Gastrocnemius medialis (tissue), 4 donors: ENCODE measurements at regions of chr16 and their contacts with region 1.

Region 1: DNA sequence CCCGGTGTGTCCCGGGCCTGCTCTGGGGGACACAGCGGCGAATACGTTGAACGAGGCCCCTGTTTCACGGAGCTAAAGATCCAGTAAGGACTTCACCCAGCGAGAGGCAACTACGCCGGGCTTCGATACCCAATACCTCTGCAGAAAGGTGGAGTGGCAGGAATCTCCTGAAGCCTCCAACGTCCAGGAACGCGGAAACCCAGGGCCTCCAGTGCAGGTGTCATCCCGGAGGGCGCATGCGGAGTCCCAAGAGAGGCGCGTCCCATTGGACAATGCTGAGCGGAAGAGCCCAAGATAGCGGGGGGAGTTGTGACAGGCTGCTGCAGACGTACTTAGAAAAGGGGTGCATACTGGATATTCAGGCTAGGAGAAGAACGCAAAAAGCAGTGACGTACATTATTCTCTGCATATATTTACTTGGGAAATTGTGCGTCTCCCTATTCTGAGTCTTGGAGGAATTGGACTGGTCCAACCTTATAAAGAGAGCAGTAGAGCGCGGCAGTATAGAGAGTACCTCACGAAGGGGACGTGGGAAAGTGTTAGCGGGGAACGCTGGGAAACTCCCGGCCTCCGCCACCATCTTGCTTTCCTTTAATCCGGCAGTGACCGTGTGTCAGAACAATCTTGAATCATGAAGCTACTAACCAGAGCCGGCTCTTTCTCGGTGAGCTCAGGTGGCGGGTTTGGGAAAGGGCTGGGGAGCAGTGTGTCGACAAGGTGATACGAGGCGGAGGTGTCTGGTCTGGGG is at the start of gene UQCRC2:
- DNase-seq: peak; percentile 86
- ATAC-seq: peak; percentile 98
- H3K4me3 ChIP-seq: peak within 1 kb of the TSS; percentile 73 to 99 (median 86)
- H3K27ac ChIP-seq: peak within 1 kb of the TSS; percentile 88 to 98 (median 96)
- H3K4me1 ChIP-seq: peaks cover 37 to 45% of the 10 kb centered on the region in 2 donors
- H3K27me3 ChIP-seq: no peaks in the 10 kb centered on the region
- CTCF ChIP-seq: peak in 1 of 5 experiments; percentile 18
- POLR2A ChIP-seq: peak; percentile 87 to 96
- total RNA-seq, gene UQCRC2: 204 to 335 (median 276) TPM

Region 2: GRCh38 chr16:22054847-22055590 is 102.1 kb after region 1 on chr16:
- in situ Hi-C with region 1: no loop called
- intact Hi-C with region 1: no loop called
- DNase-seq: no peak
- ATAC-seq: no peak
- H3K4me3 ChIP-seq: no peak overlapping the region
- H3K27ac ChIP-seq: no peak overlapping the region
- H3K4me1 ChIP-seq: no peaks in the 10 kb centered on the region
- H3K27me3 ChIP-seq: no peaks in the 10 kb centered on the region
- CTCF ChIP-seq: no peak
- POLR2A ChIP-seq: no peak

Region 3: DNA sequence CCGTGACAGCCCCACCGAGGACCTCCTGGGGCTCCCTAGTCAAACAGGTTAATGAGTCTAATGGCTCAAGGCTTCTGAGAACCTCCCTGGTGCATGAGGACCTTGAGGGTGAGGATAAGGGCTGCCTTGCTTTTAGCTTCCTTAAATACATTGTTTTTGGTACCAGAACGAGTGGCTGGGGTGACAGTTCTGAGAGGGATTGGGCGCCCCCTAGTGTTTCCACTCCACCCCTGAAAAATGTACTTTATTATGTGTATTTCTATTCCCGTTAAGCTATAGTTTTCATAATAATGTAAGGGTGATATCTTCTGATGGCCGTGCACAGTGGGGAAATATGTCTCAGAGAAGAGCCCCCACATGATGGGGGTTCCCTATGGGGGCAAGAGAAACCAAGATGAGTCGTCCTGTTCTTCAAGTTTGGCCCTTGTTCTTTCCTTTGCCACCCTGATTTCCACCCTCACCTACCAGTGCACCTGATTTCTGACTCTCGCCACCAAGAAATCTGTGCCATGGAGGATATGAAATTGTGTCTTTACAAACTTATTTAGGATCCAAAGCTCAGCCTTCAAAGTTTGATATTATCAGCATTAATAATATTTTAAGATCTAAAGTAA is 124.8 kb after region 1 on chr16:
- in situ Hi-C with region 1: no loop called
- intact Hi-C with region 1: loop called (anchors 5 kb)
- DNase-seq: peak in 1 of 2 donors; percentile 22
- ATAC-seq: peak in 1 of 2 donors; percentile 51
- H3K4me3 ChIP-seq: no peak overlapping the region
- H3K27ac ChIP-seq: no peak overlapping the region
- H3K4me1 ChIP-seq: no peaks in the 10 kb centered on the region
- H3K27me3 ChIP-seq: no peaks in the 10 kb centered on the region
- CTCF ChIP-seq: peak; percentile 49 to 79 (median 71)
- POLR2A ChIP-seq: no peak

Region 4: DNA sequence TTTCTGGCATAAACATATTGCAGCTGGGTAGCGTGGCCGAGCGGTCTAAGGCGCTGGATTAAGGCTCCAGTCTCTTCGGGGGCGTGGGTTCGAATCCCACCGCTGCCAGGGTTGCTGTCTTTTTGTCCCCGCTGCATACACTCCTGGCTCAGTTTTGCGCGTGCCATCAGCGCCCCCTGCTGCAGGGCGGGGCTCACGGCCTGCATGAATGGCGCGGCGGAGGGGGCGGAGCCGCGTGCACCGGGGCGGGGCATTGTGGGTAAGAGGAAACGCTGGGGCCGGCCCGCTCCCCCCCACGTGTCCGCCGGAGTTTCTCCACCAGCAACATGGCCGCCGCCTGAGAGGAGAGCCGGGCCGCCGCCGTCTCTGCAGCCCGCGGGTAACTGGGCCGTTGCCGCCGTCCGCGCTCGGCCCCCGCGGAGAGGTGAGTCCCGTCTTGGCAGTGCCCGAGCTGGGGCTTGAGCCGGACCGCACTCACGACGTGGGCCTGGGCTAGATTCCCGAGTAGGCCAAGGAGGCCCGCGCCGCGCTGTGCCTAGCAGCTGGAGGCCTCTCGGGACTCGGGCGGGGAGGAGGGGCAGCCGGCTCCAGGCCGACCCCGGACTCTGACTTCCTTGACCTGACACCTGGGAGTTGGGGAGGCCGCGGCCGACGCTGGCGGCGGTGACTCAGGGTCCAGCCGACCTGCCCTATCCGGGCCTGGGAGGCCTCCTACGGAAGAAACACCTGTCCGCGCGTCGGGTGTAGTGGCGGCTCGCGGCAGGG is 344.3 kb after region 1 on chr16 and contains the start of gene POLR3E:
- in situ Hi-C with region 1: no loop called
- intact Hi-C with region 1: loop called (anchors 5 kb)
- DNase-seq: peak; percentile 98 to 99
- ATAC-seq: peak; percentile 77 to 79
- H3K4me3 ChIP-seq: peak within 1 kb of the TSS; percentile 87 to 97 (median 94)
- H3K27ac ChIP-seq: peak within 1 kb of the TSS; percentile 97 to 100 (median 98)
- H3K4me1 ChIP-seq: peaks cover 12 to 18% of the 10 kb centered on the region in 2 donors
- H3K27me3 ChIP-seq: no peaks in the 10 kb centered on the region
- CTCF ChIP-seq: peak; percentile 93 to 98 (median 98)
- POLR2A ChIP-seq: peak; percentile 88 to 90
- total RNA-seq, gene POLR3E: 105 to 182 (median 116) TPM